ENCODE measurements at regions of chr16 and their contacts with region 1.

Region 1: GRCh38 chr16:19502395-19503131 is 19.3 kb downstream of the GDE1 start:
- DNase-seq: peak; percentile 73
- H3K4me3 ChIP-seq: no peak overlapping the region
- H3K27ac ChIP-seq: no peak overlapping the region
- H3K4me1 ChIP-seq: no peaks in the 10 kb centered on the region
- CTCF ChIP-seq: peak; percentile 90

Region 2: GRCh38 chr16:19389246-19389645 is 113.3 kb before region 1 on chr16:
- CTCF ChIA-PET with region 1: no interaction called
- POLR2A ChIA-PET with region 1: no interaction called
- intact Hi-C with region 1: loop called (anchors 1 kb)
- DNase-seq: peak; percentile 60
- H3K4me3 ChIP-seq: no peak overlapping the region
- H3K27ac ChIP-seq: no peak overlapping the region
- H3K4me1 ChIP-seq: peaks cover 5% of the 10 kb centered on the region
- CTCF ChIP-seq: peak; percentile 77

Region 3: GRCh38 chr16:19458718-19459379 is 43.7 kb before region 1 on chr16:
- CTCF ChIA-PET with region 1: no interaction called
- POLR2A ChIA-PET with region 1: no interaction called
- intact Hi-C with region 1: no loop called
- DNase-seq: no peak
- H3K4me3 ChIP-seq: no peak overlapping the region
- H3K27ac ChIP-seq: no peak overlapping the region
- H3K4me1 ChIP-seq: no peaks in the 10 kb centered on the region
- CTCF ChIP-seq: no peak

Measured in OCI-LY7 (cell line).